PC-3 (cell line): ENCODE measurements at regions of chr7 and their contacts with region 1.

Region 1: DNA sequence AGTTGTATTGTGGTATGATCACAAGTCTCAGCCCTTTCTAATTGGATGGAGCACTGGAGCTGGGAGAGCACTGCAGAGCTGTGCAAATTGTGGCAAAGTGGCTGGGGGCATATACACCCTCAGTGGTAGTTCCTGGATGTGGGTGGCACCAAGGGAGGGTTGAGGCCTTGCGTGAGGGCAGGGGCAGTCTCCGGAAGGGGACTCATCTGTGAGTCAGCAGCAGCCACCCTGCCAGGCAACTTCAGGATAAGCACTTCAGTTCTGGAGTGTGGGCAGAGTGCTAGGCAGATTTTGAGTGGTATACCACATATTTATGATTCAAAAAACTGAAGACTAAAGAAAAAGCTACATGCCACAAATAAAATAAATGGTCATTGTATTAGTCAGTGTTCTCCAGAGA is 210.5 kb downstream of the ETV1 start:
- DNase-seq: peak; percentile 92
- ATAC-seq: peak; percentile 95
- H3K4me3 ChIP-seq: no peak overlapping the region
- H3K27ac ChIP-seq: peak overlapping the region; percentile 95
- H3K4me1 ChIP-seq: peaks cover 26% of the 10 kb centered on the region
- H3K27me3 ChIP-seq: no peaks in the 10 kb centered on the region
- CTCF ChIP-seq: no peak

Region 2: GRCh38 chr7:13822678-13823077 is 43.7 kb after region 1 on chr7:
- CTCF ChIA-PET with region 1: no interaction called
- POLR2A ChIA-PET with region 1: interaction called, 4 read pairs
- intact Hi-C with region 1: loop called (anchors 2 kb)
- DNase-seq: peak; percentile 78
- ATAC-seq: peak; percentile 78
- H3K4me3 ChIP-seq: no peak overlapping the region
- H3K27ac ChIP-seq: peak overlapping the region; percentile 98
- H3K4me1 ChIP-seq: peaks cover 44% of the 10 kb centered on the region
- H3K27me3 ChIP-seq: no peaks in the 10 kb centered on the region
- CTCF ChIP-seq: no peak